Naive thymus-derived CD4-positive, alpha-beta T cell (primary cell): ENCODE measurements at regions of chr12 and their contacts with region 1.

Region 1: DNA sequence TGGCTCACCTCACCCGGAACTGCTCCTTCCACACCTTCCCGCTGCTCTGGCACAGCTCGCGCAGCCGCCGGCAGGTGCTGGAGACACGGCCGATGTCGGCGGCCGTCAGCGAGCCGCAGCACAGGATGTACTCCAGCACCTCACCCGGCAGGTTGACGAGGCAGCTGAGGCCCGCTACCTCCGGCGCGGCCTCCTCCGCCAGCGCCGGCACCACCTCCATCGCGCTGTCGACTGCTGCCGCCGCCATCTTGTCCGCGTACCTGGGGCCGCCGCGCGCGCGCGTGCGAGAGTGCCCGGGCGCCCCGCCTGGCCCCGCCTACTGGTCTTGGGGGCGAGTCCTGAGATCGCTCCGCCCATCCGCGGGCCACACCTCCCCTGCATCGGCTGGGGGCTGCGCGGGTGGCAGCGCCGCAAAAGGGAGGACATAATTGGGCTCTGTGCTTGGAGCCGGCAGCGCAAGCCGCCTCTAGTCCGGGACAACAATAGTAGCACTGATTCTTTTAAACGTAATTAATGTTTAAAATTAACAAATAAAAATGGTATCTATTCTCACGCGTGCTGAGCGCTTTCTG is at the start of gene FBXO21:
- DNase-seq: peak; percentile 92 to 98 (median 95)
- ATAC-seq: peak; percentile 99
- H3K4me3 ChIP-seq: peak within 1 kb of the TSS; percentile 65
- H3K4me3 Mint-ChIP-seq: peak within 1 kb of the TSS; percentile 93 to 97 (median 95)
- H3K27ac ChIP-seq: peak within 1 kb of the TSS; percentile 77
- H3K27ac Mint-ChIP-seq: peak within 1 kb of the TSS; percentile 85 to 95 (median 93)
- H3K4me1 ChIP-seq: peaks cover 8 to 11% of the 10 kb centered on the region in 2 donors
- H3K4me1 Mint-ChIP-seq: peaks cover 13 to 52% (median 34%) of the 10 kb centered on the region in 7 donors
- H3K27me3 ChIP-seq: no peaks in the 10 kb centered on the region
- H3K27me3 Mint-ChIP-seq: peaks cover 0 to 12% (median 0%) of the 10 kb centered on the region in 5 donors
- total RNA-seq, gene FBXO21: 30.4 to 62.9 (median 48.6) TPM

Region 2: GRCh38 chr12:116818948-116819832 is 371.1 kb before region 1 on chr12:
- CTCF ChIA-PET with region 1: no interaction called
- POLR2A ChIA-PET with region 1: no interaction called
- intact Hi-C with region 1: loop called (anchors 1 to 2 kb)
- DNase-seq: peak; percentile 86 to 94 (median 91)
- ATAC-seq: peak; percentile 90
- H3K4me3 ChIP-seq: peak overlapping the region; percentile 99
- H3K4me3 Mint-ChIP-seq: peak overlapping the region; percentile 78 to 99 (median 94)
- H3K27ac ChIP-seq: peak overlapping the region; percentile 97
- H3K27ac Mint-ChIP-seq: peak overlapping the region; percentile 87 to 99 (median 96)
- H3K4me1 ChIP-seq: peaks cover 7 to 11% of the 10 kb centered on the region in 2 donors
- H3K4me1 Mint-ChIP-seq: peaks cover 12 to 31% (median 24%) of the 10 kb centered on the region in 7 donors
- H3K27me3 ChIP-seq: no peaks in the 10 kb centered on the region
- H3K27me3 Mint-ChIP-seq: no peaks in the 10 kb centered on the region

Region 3: GRCh38 chr12:116924558-116925453 is 265.5 kb before region 1 on chr12:
- CTCF ChIA-PET with region 1: no interaction called
- POLR2A ChIA-PET with region 1: no interaction called
- intact Hi-C with region 1: loop called in 1 of 2 experiments (anchors 5 kb)
- DNase-seq: peak in 8 of 9 donors; percentile 46 to 86 (median 80)
- ATAC-seq: peak; percentile 96
- H3K4me3 ChIP-seq: peak overlapping the region; percentile 21
- H3K4me3 Mint-ChIP-seq: peak overlapping the region; percentile 27 to 82 (median 77)
- H3K27ac ChIP-seq: no peak overlapping the region
- H3K27ac Mint-ChIP-seq: peak overlapping the region; percentile 40 to 82 (median 62)
- H3K4me1 ChIP-seq: peaks cover 26 to 59% of the 10 kb centered on the region in 2 donors
- H3K4me1 Mint-ChIP-seq: peaks cover 51 to 86% (median 70%) of the 10 kb centered on the region in 7 donors
- H3K27me3 ChIP-seq: no peaks in the 10 kb centered on the region
- H3K27me3 Mint-ChIP-seq: peaks cover 0 to 8% (median 0%) of the 10 kb centered on the region in 5 donors

Region 4: DNA sequence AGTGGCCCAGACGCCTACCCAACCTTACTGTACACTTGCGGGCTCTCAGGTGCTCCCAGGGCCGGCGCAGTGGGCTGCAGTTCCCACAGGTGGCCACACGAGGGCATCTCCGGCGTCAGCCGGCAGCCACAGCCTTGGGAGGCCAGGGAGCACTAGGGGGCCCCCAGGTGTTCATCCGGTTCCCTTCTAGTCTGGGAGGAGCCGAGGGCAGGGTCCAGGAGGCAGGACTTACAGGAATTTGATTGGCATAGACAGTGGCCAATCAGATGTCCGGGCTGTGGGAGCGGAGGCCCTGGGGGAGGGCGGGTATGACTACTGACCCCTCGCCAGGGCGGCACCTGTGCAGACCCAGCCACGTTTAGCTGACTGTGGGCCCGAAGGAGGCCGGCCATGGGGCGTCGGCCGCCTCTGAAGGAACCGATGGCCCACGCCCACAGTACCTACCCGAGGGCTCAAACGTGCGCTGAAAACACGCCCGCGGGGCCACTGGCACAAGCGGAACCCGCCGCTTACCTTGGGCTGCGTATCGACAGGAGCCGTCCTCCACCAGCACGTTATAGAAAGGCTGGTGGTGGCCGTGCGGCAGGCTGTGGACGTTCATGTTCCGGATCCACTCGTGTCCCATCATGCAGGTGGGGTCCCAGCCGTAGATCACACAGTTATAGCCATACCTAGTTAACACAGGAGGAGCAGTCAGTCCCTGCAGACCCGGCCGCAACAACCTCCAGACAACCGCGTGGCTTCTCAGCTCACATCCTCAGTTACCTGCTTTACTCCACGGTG is 34.8 kb before region 1 on chr12:
- CTCF ChIA-PET with region 1: no interaction called
- POLR2A ChIA-PET with region 1: no interaction called
- intact Hi-C with region 1: loop called (anchors 1 kb)
- DNase-seq: peak; percentile 49 to 75 (median 67)
- ATAC-seq: peak; percentile 87
- H3K4me3 ChIP-seq: no peak overlapping the region
- H3K4me3 Mint-ChIP-seq: no peak overlapping the region
- H3K27ac ChIP-seq: no peak overlapping the region
- H3K27ac Mint-ChIP-seq: peak overlapping the region in 1 of 9 donors; percentile 59
- H3K4me1 ChIP-seq: peaks cover 0 to 4% of the 10 kb centered on the region in 2 donors
- H3K4me1 Mint-ChIP-seq: peaks cover 2 to 26% (median 10%) of the 10 kb centered on the region in 7 donors
- H3K27me3 ChIP-seq: no peaks in the 10 kb centered on the region
- H3K27me3 Mint-ChIP-seq: peaks cover 0 to 2% (median 0%) of the 10 kb centered on the region in 5 donors

Region 5: DNA sequence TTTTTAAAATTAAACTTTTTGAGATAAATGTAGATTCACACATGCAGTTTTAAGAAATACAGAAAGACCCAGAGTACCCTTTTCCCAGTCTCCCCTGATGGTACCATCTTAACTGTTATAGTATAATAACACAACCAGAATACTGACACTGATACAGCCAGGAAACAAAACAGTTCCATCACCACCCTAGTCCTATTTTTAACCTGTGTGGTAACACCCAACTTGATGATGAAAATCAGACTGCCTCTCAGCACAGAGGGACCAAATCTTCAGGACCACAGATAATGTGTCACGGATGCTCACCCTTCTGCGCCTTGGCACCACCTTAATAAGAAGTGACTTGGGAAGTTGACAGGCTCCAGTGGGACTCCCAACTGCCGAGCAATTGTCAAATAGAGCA is 18.1 kb before region 1 on chr12:
- CTCF ChIA-PET with region 1: no interaction called
- POLR2A ChIA-PET with region 1: no interaction called
- intact Hi-C with region 1: loop called in 1 of 2 experiments (anchors 2 kb)
- DNase-seq: no peak
- ATAC-seq: no peak
- H3K4me3 ChIP-seq: no peak overlapping the region
- H3K4me3 Mint-ChIP-seq: no peak overlapping the region
- H3K27ac ChIP-seq: no peak overlapping the region
- H3K27ac Mint-ChIP-seq: peak overlapping the region in 1 of 9 donors; percentile 41
- H3K4me1 ChIP-seq: peaks cover 0 to 3% of the 10 kb centered on the region in 2 donors
- H3K4me1 Mint-ChIP-seq: peaks cover 0 to 18% (median 11%) of the 10 kb centered on the region in 7 donors
- H3K27me3 ChIP-seq: no peaks in the 10 kb centered on the region
- H3K27me3 Mint-ChIP-seq: no peaks in the 10 kb centered on the region

Region 6: DNA sequence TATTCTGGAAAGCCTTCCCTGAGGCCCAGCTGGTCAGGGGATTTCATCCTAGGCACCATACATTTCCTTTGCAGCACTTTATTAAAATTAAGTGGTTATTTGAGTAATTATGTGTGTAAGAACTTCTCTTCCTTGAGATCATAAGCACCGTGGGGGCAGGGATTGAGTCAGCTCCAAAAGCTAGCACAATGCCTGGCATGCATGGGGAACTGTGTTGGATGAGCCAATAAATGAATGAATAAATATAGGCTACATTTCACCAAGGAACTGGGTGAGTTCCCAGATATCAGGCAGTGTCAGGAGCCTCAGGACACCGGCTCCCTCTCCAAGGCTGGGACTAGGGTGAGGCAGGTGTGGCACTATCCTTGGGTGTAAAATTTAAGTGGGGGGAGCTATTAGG is 82.8 kb after region 1 on chr12:
- CTCF ChIA-PET with region 1: no interaction called
- POLR2A ChIA-PET with region 1: no interaction called
- intact Hi-C with region 1: no loop called
- DNase-seq: no peak
- ATAC-seq: no peak
- H3K4me3 ChIP-seq: no peak overlapping the region
- H3K4me3 Mint-ChIP-seq: no peak overlapping the region
- H3K27ac ChIP-seq: no peak overlapping the region
- H3K27ac Mint-ChIP-seq: no peak overlapping the region
- H3K4me1 ChIP-seq: no peaks in the 10 kb centered on the region
- H3K4me1 Mint-ChIP-seq: no peaks in the 10 kb centered on the region
- H3K27me3 ChIP-seq: no peaks in the 10 kb centered on the region
- H3K27me3 Mint-ChIP-seq: peaks cover 0 to 45% (median 25%) of the 10 kb centered on the region in 5 donors

Region 7: DNA sequence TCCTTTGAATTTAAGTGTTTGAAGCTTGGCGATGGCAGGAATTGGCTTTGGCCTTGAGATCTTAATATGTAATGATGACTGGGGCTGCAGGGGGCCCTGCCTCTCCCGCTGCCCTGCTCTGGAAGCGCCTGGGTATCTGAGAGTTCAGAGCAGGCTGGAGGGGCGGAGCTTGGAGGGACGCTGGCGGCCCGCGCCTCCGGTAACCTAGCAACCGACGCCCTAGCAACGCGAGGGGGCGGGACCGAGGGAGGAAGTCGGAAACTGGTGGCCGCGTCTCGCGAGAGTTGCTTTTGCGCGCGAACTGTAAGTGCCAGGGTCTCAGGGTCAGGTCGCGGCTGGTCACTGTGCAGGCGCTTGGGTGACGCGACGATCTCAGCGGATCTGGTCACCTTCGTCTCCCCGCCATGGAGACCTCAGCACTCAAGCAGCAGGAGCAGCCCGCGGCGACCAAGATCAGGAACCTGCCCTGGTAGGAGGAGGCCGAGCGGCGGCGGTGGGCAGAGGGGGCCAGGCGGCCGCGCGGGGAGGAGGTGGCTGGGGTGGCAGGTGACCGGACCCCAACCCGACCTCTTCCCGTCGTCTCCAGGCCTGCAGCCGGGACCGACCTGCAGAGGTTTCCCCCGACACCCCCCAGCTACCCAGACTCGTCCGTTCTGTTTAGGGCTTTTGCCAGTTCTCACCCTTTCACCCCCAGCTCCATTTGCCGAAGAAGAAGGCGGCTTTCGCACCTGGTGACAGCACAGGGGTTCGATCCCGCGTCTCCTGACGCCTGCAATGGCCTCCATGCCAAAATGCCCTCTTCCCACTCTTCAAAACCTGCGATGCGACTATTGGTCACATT is 826.3 kb after region 1 on chr12 and contains the start of gene RFC5:
- CTCF ChIA-PET with region 1: no interaction called
- POLR2A ChIA-PET with region 1: no interaction called
- intact Hi-C with region 1: loop called (anchors 2 to 5 kb)
- DNase-seq: peak; percentile 93 to 98 (median 97)
- ATAC-seq: peak; percentile 99
- H3K4me3 ChIP-seq: peak within 1 kb of the TSS; percentile 80
- H3K4me3 Mint-ChIP-seq: peak within 1 kb of the TSS; percentile 89 to 95 (median 92)
- H3K27ac ChIP-seq: peak within 1 kb of the TSS; percentile 69
- H3K27ac Mint-ChIP-seq: peak within 1 kb of the TSS; percentile 82 to 95 (median 92)
- H3K4me1 ChIP-seq: peaks cover 10 to 13% of the 10 kb centered on the region in 2 donors
- H3K4me1 Mint-ChIP-seq: peaks cover 11 to 29% (median 18%) of the 10 kb centered on the region in 7 donors
- H3K27me3 ChIP-seq: no peaks in the 10 kb centered on the region
- H3K27me3 Mint-ChIP-seq: peaks cover 0 to 7% (median 0%) of the 10 kb centered on the region in 5 donors
- total RNA-seq, gene RFC5: 6.3 to 40.3 (median 15.6) TPM

Region 8: GRCh38 chr12:118061011-118061875 is 870.9 kb after region 1 on chr12 and contains the start of gene WSB2:
- CTCF ChIA-PET with region 1: no interaction called
- POLR2A ChIA-PET with region 1: no interaction called
- intact Hi-C with region 1: loop called (anchors 5 kb)
- DNase-seq: peak; percentile 24 to 81 (median 39)
- ATAC-seq: peak; percentile 53
- H3K4me3 ChIP-seq: peak within 1 kb of the TSS; percentile 88
- H3K4me3 Mint-ChIP-seq: peak within 1 kb of the TSS; percentile 88 to 100 (median 96)
- H3K27ac ChIP-seq: peak within 1 kb of the TSS; percentile 80
- H3K27ac Mint-ChIP-seq: peak within 1 kb of the TSS; percentile 92 to 98 (median 94)
- H3K4me1 ChIP-seq: peaks cover 13 to 32% of the 10 kb centered on the region in 2 donors
- H3K4me1 Mint-ChIP-seq: peaks cover 44 to 65% (median 57%) of the 10 kb centered on the region in 7 donors
- H3K27me3 ChIP-seq: no peaks in the 10 kb centered on the region
- H3K27me3 Mint-ChIP-seq: no peaks in the 10 kb centered on the region
- total RNA-seq, gene WSB2: 12.2 to 52.2 (median 19.1) TPM